PC-3 (cell line): ENCODE measurements at regions of chr4 and their contacts with region 1.

Region 1: DNA sequence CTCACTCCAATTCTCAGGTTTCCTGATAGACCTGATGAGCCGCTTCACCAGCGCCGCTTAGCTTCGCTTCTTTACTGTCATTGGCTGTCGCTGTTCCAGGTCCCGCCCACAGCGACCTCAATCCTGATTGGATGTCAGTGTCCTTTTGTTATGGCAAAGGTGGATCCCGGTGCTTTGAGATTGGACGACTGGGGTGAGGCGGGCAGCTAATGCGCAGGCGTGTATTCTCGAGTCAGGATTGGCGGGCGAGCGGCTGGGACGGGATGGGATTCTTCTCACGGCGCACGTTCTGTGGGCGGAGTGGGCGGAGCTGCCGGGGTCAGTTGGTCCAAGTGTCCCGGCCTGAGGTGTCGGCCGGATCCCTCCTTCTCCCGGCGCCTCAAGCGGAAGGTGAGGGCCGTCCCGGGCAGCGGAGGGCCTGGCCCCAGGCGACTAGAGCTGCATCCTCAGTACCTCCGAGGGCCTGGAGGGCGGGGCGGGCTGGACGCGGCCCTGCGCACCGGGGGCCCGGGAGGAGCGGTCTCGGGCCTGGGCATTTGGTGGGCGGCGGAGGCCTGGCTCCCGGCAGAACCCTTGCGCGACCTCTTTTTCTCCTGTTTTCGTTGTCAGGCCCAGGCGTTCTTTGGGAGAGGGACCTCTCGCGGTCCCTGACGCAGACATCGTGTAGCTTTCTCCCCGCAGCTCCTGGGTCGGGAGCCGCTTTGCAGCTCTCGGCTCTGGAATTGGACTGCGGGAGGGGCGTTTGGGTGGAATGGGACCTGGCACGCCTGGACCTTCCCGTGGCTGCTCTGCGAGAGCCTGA is at the start of gene SCOC:
- DNase-seq: peak; percentile 99
- ATAC-seq: peak; percentile 88
- H3K4me3 ChIP-seq: peak within 1 kb of the TSS; percentile 92
- H3K27ac ChIP-seq: peak within 1 kb of the TSS; percentile 66
- H3K4me1 ChIP-seq: peaks cover 37% of the 10 kb centered on the region
- H3K27me3 ChIP-seq: no peaks in the 10 kb centered on the region
- CTCF ChIP-seq: no peak
- total RNA-seq, gene SCOC: 22.5 and 28.2 TPM in 2 replicates

Region 2: DNA sequence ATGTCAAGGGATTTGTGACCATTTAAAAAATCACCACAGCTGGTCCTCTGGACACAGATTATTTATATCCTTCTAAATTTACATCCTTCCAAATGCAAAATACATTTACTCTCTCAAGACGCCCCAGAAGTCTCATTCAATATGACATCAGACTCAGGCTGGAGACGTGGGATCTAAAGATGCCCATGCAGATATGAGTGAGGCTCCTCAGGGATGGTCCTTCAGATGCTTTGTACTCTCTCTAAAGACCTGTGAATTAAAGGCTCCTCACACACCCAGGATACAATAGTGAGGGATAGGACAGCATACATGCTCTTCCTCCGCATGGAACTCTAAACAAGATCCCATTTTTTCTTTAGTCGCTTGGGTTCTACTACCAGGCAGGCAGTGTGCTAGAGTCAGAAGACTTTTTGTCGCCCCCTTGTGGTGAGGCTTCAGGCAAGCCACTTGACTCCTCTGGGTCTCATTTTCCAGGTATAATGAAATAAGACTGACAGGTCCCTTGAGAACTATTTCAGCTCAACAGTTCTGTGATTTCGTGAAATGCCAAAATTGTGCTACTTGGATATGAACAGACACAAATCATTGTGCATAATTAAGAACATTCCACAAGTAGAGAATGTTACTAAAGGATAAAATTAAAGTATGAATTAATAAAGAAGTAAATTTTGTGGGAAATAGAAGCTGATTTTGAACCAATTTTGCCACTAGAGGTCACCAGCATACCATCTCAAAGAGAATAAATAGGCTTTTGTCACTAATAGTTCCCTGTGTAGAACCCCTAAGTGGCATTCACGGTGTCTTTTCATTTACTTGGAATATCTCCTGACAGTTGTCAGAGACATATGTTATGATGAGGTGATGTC is 13.7 kb before region 1 on chr4:
- CTCF ChIA-PET with region 1: interaction called, 21 read pairs
- POLR2A ChIA-PET with region 1: no interaction called
- intact Hi-C with region 1: no loop called
- DNase-seq: peak; percentile 86
- ATAC-seq: peak; percentile 95
- H3K4me3 ChIP-seq: no peak overlapping the region
- H3K27ac ChIP-seq: no peak overlapping the region
- H3K4me1 ChIP-seq: no peaks in the 10 kb centered on the region
- H3K27me3 ChIP-seq: no peaks in the 10 kb centered on the region
- CTCF ChIP-seq: peak; percentile 89

Region 3: GRCh38 chr4:140427106-140427961 is 53.8 kb after region 1 on chr4 and contains the start of gene CLGN:
- CTCF ChIA-PET with region 1: no interaction called
- POLR2A ChIA-PET with region 1: no interaction called
- intact Hi-C with region 1: loop called (anchors 2 kb)
- DNase-seq: peak; percentile 66
- ATAC-seq: peak; percentile 76
- H3K4me3 ChIP-seq: peak within 1 kb of the TSS; percentile 93
- H3K27ac ChIP-seq: peak within 1 kb of the TSS; percentile 25; the same call in 1 of the 2 replicates
- H3K4me1 ChIP-seq: peaks cover 40% of the 10 kb centered on the region
- H3K27me3 ChIP-seq: no peaks in the 10 kb centered on the region
- CTCF ChIP-seq: peak; percentile 48; the same call in 1 of the 2 replicates
- total RNA-seq, gene CLGN: 7.9 and 9.6 TPM in 2 replicates

Region 4: DNA sequence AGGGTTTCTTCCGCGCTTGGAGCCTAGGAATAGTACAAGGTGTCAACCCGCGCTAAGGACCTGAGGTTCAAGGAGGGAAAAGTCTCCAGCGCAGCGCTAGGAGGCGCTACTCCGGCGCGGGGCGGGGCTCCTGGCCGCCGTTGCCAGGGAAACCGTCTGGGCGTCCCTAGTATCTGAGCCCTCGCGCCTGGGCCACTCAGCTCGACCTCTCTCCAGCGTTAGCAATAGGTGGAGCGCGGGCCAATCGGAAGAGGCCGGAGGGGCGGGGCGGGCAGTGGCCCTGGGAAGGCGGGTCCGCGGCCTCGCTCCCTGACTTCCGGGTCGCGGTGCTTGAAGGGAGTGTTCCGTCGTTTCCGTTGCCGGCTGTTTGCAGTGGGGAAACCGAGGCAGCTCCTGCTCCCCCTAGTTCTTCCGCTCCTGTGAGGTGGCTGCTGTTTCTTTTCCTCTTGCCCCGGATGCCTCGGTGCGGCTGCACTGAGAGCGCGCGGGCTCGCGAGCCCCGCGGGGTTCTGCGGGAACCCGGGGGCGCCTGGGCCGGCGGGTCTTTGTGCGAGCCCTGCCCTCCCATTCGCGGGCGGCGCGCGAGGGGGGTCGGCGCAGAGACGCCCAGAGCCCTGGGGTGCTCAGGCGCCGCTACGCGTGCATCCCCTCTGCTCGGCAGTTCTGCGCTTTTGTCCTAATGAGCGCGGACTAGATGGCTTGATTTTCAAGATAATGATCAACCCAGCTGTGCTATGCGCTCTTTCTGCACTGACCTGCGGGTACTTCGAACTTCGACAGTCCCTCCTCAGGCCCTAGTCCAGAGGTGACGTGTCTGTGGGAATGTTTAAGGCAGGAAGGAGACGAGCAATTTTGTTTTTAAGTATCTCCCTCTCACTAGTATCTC is 150.6 kb after region 1 on chr4 and contains the start of gene ELMOD2:
- CTCF ChIA-PET with region 1: interaction called, 3 read pairs
- POLR2A ChIA-PET with region 1: interaction called, 4 read pairs
- intact Hi-C with region 1: loop called (anchors 5 kb)
- DNase-seq: peak; percentile 92
- ATAC-seq: peak; percentile 100
- H3K4me3 ChIP-seq: peak within 1 kb of the TSS; percentile 77
- H3K27ac ChIP-seq: peak within 1 kb of the TSS; percentile 37
- H3K4me1 ChIP-seq: peaks cover 7% of the 10 kb centered on the region; the same call in 1 of the 2 replicates
- H3K27me3 ChIP-seq: no peaks in the 10 kb centered on the region
- CTCF ChIP-seq: peak; percentile 77
- total RNA-seq, gene ELMOD2: 10.1 and 12.1 TPM in 2 replicates

Region 5: GRCh38 chr4:140756319-140757231 is 383.0 kb after region 1 on chr4 and contains the start of gene TBC1D9:
- CTCF ChIA-PET with region 1: no interaction called
- POLR2A ChIA-PET with region 1: no interaction called
- intact Hi-C with region 1: loop called (anchors 10 kb)
- DNase-seq: peak; percentile 61
- ATAC-seq: peak; percentile 65
- H3K4me3 ChIP-seq: peak within 1 kb of the TSS; percentile 86
- H3K27ac ChIP-seq: peak within 1 kb of the TSS; percentile 51
- H3K4me1 ChIP-seq: peaks cover 10% of the 10 kb centered on the region; the same call in 1 of the 2 replicates
- H3K27me3 ChIP-seq: no peaks in the 10 kb centered on the region
- CTCF ChIP-seq: no peak
- total RNA-seq, gene TBC1D9: 11.2 and 12.7 TPM in 2 replicates